ENCODE measurements at regions of chr2 and their contacts with region 1.

Region 1: GRCh38 chr2:46098606-46099005 is 198.6 kb upstream of the EPAS1 start:
- DNase-seq: peak; percentile 68
- H3K4me3 ChIP-seq: no peak overlapping the region
- H3K27ac ChIP-seq: peak overlapping the region; percentile 99
- H3K27me3 ChIP-seq: no peaks in the 10 kb centered on the region
- CTCF ChIP-seq: no peak

Region 2: GRCh38 chr2:46119453-46119852 is 20.8 kb after region 1 on chr2:
- CTCF ChIA-PET with region 1: interaction called, 11 read pairs
- POLR2A ChIA-PET with region 1: no interaction called
- DNase-seq: no peak
- H3K4me3 ChIP-seq: no peak overlapping the region
- H3K27ac ChIP-seq: no peak overlapping the region
- H3K27me3 ChIP-seq: no peaks in the 10 kb centered on the region
- CTCF ChIP-seq: no peak

Region 3: GRCh38 chr2:46470114-46470628 is 371.6 kb after region 1 on chr2:
- CTCF ChIA-PET with region 1: no interaction called
- POLR2A ChIA-PET with region 1: no interaction called
- DNase-seq: no peak
- H3K4me3 ChIP-seq: no peak overlapping the region
- H3K27ac ChIP-seq: no peak overlapping the region
- H3K27me3 ChIP-seq: no peaks in the 10 kb centered on the region
- CTCF ChIP-seq: no peak

Region 4: DNA sequence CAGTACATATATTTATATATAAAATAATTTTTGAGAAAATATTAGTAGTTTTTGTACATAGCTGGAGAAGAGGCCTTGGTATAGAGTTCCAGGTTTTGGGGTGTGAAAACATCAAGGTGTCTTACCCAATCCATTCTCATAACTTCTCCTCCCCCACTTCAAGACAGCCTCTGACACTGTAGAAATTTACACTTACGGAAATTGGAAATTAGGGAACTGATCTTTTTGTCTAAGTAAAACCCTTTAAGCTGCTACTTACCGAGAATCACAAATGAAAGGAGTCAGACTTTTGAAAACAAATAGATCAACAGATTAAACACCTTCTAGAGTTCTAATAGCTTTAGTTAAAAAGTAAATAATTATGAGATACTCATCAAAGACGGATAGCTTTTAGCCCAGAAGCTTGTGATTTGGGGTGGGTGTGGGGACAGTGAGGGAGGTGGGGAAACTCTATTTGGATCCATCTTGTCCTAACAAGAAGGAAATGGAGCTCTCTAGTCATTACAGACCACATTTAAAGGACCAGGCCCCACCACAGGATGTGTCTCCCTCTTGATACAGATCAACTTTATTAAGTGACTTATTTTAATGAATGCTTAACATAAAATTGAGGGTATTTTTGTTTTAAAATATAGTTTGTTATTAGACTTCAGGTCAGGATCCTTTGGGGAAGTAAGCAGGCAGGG is 1818.8 kb after region 1 on chr2:
- CTCF ChIA-PET with region 1: no interaction called
- POLR2A ChIA-PET with region 1: no interaction called
- DNase-seq: no peak
- H3K4me3 ChIP-seq: no peak overlapping the region
- H3K27ac ChIP-seq: no peak overlapping the region
- H3K27me3 ChIP-seq: peaks cover 2% of the 10 kb centered on the region
- CTCF ChIP-seq: no peak